Activated T-helper 2 cell treated with anti-CD3 and anti-CD28 coated beads, Interferon-gamma antibody, Interleukin-2, Interleukin-4, amounts not matched to agents 10 μg/mL and 5 μg/mL and 100 μg/mL, durations not matched to agents 14 hours and 24 hours and 36 hours (primary cell): ENCODE measurements at regions of chr14 and their contacts with region 1.

Region 1: DNA sequence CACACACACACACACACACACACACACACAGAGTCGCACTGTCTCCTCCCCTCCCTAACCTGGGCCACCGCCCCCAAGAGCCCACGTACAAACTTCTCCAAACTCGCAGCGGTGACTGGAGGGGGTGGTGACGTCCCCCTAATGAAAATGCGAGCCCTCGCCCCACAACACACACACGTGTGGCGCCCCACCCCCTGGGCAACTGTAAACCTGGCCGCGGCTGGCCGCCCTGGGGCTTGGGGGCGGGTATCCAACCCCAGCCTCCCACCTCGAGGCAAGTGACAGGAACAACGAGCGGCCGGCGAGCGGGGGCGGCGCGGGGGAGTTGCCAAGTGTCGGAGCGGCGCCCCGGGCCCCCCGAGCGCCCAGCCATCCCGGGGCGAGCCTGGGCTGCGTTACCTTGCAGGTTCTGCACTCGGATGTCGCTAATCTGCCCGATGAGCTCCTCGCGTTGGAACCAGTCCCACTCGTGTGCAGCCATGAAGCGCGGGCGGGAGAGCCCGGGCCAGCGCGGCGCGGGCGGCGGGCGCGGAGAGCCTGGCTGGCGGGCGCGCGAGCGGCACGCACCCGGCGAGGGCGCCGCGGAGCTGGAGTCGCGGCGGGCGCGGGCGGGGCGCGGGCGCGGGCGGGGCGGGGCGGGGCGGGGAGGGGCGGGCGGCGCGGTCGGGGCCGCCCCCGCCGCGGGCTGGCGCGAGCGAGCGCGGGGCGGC is at the start of gene CLMN:
- DNase-seq: peak; percentile 21
- H3K4me3 Mint-ChIP-seq: peak within 1 kb of the TSS; percentile 51
- H3K27ac Mint-ChIP-seq: no peak within 1 kb of the TSS
- H3K4me1 Mint-ChIP-seq: peaks cover 14% of the 10 kb centered on the region
- H3K27me3 Mint-ChIP-seq: peaks cover 48% of the 10 kb centered on the region
- total RNA-seq, gene CLMN: 0.51 and 1.3 TPM in 2 replicates

Region 2: GRCh38 chr14:95157327-95158189 is 161.9 kb before region 1 on chr14 and contains the start of gene DICER1:
- intact Hi-C with region 1: loop called (anchors 5 kb)
- DNase-seq: peak; percentile 90
- H3K4me3 Mint-ChIP-seq: peak within 1 kb of the TSS; percentile 91
- H3K27ac Mint-ChIP-seq: peak within 1 kb of the TSS; percentile 97
- H3K4me1 Mint-ChIP-seq: peaks cover 31% of the 10 kb centered on the region
- H3K27me3 Mint-ChIP-seq: no peaks in the 10 kb centered on the region
- total RNA-seq, gene DICER1: 64.0 and 67.1 TPM in 2 replicates

Region 3: DNA sequence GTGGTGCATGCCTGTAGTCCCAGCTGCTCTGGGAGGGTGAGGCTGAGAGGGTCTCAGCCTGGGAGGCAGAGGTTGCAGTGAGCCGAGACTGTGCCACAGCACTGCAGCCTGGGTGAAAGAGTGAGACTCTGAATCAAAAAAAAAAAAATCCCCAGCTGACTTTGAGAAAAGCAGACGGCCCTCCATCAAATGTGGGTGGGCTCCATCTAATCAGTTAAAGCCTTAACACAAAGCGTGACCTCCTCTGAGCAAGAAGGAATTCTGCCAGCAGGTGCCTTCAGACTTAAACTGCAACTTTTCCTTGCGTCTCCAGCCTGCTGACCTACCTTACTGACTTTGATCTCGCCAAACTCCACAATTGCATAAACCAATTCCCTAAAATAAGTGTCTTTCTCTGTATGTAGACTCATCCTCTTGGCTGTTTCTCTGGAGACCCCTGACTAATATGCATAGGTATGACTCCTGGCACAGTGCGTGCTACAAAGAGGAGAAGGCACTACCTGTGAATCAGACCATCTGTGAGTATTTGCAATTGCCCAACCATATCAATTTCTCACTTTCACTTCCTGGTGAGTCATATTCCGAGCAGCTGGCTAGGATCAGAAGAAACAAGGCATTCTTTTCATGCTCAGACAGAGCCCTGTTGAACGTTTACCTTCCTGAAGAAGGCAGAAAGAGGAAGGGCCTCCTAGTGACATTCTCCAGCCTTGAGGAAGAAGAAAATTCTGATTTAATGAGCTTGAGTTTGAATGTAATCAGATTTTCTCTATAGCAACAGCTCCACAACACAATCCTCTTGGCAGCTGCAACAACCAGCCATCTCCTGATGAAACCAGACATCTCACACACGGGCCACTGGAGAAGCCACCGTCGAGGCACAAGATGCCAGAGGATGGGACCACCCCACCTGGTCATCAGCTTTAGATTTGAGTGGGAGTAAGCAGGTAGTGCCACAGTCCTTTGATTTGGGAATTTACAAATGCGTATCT is 54.1 kb before region 1 on chr14:
- intact Hi-C with region 1: loop called (anchors 2 kb)
- DNase-seq: peak; percentile 43
- H3K4me3 Mint-ChIP-seq: no peak overlapping the region
- H3K27ac Mint-ChIP-seq: peak overlapping the region; percentile 2
- H3K4me1 Mint-ChIP-seq: peaks cover 44% of the 10 kb centered on the region
- H3K27me3 Mint-ChIP-seq: peaks cover 2% of the 10 kb centered on the region